CD4-positive, alpha-beta memory T cell (primary cell): ENCODE measurements at regions of chr3 and their contacts with region 1.

Region 1: DNA sequence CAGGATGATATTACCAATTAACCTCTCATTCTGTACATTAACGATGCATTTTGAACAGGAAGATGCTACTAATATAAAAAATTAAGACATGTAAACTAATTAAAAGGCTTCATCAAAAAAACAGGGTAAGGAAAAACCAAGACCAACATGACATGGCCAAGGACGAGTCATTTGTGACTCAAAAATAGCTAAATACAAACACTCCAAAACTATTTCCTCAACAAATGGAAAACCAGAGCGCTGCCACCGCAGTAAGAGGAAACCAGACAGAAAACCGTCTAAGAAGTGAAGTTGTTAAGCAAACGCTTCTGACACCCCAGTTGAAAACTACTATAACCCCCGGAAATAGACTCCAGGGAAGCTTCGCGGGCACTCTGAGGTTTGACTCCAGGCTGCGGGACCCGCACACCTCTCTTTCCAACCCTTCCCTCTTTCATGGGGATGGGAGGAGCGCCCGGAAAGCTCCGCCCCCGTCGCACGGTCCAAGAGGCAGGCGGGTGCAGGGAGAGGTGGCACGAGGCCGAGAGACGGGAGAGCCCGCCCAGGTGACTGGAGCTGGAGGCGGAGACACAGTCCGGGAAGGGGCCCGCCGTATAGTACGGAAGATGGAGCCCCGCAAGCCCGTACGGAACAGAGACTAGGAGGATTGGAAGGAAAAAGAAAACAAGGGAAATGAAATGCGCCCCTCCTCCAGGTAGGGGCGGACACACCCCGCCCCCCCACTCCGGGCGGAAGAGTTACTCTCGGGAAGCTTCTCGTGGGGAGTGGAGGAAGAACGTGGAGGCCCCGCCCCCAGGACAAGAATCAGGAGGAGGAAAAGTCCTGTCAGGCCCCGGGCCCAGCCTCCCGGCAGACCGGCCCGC is 708 bp downstream of the DCAF1 start:
- DNase-seq: peak; percentile 77 to 86 (median 79)
- H3K4me3 ChIP-seq: peak overlapping the region; percentile 54 to 81
- H3K4me3 Mint-ChIP-seq: peak overlapping the region; percentile 91 to 100 (median 95)
- H3K27ac ChIP-seq: peak overlapping the region; percentile 88
- H3K27ac Mint-ChIP-seq: peak overlapping the region; percentile 93 to 99 (median 98)
- H3K4me1 ChIP-seq: peaks cover 25% of the 10 kb centered on the region
- H3K4me1 Mint-ChIP-seq: peaks cover 12 to 27% (median 14%) of the 10 kb centered on the region in 4 donors
- H3K27me3 ChIP-seq: no peaks in the 10 kb centered on the region
- H3K27me3 Mint-ChIP-seq: peaks cover 0 to 2% of the 10 kb centered on the region in 2 donors

Region 2: GRCh38 chr3:51384726-51385473 is 114.2 kb before region 1 on chr3 and contains the start of gene MANF:
- CTCF ChIA-PET with region 1: interaction called, 52 read pairs
- POLR2A ChIA-PET with region 1: interaction called, 34 read pairs
- intact Hi-C with region 1: loop called (anchors 1 kb)
- DNase-seq: peak; percentile 97 to 98 (median 98)
- H3K4me3 ChIP-seq: peak within 1 kb of the TSS; percentile 61 to 93
- H3K4me3 Mint-ChIP-seq: peak within 1 kb of the TSS; percentile 98 to 99 (median 99)
- H3K27ac ChIP-seq: peak within 1 kb of the TSS; percentile 92
- H3K27ac Mint-ChIP-seq: peak within 1 kb of the TSS; percentile 98 to 100 (median 99)
- H3K4me1 ChIP-seq: peaks cover 38% of the 10 kb centered on the region
- H3K4me1 Mint-ChIP-seq: peaks cover 25 to 62% (median 42%) of the 10 kb centered on the region in 4 donors
- H3K27me3 ChIP-seq: no peaks in the 10 kb centered on the region
- H3K27me3 Mint-ChIP-seq: no peaks in the 10 kb centered on the region
- total RNA-seq, gene MANF: 74.8 to 79.0 TPM

Region 3: GRCh38 chr3:51538459-51539290 is 39.6 kb after region 1 on chr3 and contains the start of gene RAD54L2:
- CTCF ChIA-PET with region 1: interaction called, 35 read pairs
- POLR2A ChIA-PET with region 1: interaction called, 41 read pairs
- intact Hi-C with region 1: loop called (anchors 1 kb)
- DNase-seq: peak; percentile 62 to 74 (median 66)
- H3K4me3 ChIP-seq: peak within 1 kb of the TSS; percentile 76 to 80
- H3K4me3 Mint-ChIP-seq: peak within 1 kb of the TSS; percentile 85 to 98 (median 94)
- H3K27ac ChIP-seq: peak within 1 kb of the TSS; percentile 67
- H3K27ac Mint-ChIP-seq: peak within 1 kb of the TSS; percentile 91 to 97 (median 95)
- H3K4me1 ChIP-seq: peaks cover 27% of the 10 kb centered on the region
- H3K4me1 Mint-ChIP-seq: peaks cover 26 to 42% (median 33%) of the 10 kb centered on the region in 4 donors
- H3K27me3 ChIP-seq: no peaks in the 10 kb centered on the region
- H3K27me3 Mint-ChIP-seq: no peaks in the 10 kb centered on the region
- total RNA-seq, gene RAD54L2: 39.8 to 40.1 TPM

Region 4: DNA sequence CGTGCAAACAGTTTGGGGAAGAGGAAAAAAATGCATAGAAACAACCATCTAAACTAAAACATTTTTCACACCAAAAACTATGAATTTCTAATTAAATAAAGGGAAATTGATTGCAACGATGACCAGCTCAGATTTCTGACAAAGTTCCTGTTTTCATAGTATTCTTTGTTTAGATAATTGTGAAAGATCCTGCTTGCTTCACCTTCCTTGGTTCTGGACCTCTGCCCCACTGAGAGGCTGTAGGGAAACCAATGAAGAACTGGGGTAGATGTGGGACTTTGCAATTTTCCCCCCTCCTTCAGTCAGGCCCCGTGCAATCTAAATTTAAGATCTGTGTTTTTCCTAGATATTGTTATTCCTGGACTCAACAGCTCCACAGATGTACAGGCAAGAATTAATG is 158.1 kb after region 1 on chr3:
- CTCF ChIA-PET with region 1: no interaction called
- POLR2A ChIA-PET with region 1: no interaction called
- intact Hi-C with region 1: no loop called
- DNase-seq: no peak
- H3K4me3 ChIP-seq: no peak overlapping the region
- H3K4me3 Mint-ChIP-seq: no peak overlapping the region
- H3K27ac ChIP-seq: no peak overlapping the region
- H3K27ac Mint-ChIP-seq: peak overlapping the region in 2 of 7 donors; percentile 21 to 64
- H3K4me1 ChIP-seq: no peaks in the 10 kb centered on the region
- H3K4me1 Mint-ChIP-seq: no peaks in the 10 kb centered on the region
- H3K27me3 ChIP-seq: no peaks in the 10 kb centered on the region
- H3K27me3 Mint-ChIP-seq: no peaks in the 10 kb centered on the region

Region 5: DNA sequence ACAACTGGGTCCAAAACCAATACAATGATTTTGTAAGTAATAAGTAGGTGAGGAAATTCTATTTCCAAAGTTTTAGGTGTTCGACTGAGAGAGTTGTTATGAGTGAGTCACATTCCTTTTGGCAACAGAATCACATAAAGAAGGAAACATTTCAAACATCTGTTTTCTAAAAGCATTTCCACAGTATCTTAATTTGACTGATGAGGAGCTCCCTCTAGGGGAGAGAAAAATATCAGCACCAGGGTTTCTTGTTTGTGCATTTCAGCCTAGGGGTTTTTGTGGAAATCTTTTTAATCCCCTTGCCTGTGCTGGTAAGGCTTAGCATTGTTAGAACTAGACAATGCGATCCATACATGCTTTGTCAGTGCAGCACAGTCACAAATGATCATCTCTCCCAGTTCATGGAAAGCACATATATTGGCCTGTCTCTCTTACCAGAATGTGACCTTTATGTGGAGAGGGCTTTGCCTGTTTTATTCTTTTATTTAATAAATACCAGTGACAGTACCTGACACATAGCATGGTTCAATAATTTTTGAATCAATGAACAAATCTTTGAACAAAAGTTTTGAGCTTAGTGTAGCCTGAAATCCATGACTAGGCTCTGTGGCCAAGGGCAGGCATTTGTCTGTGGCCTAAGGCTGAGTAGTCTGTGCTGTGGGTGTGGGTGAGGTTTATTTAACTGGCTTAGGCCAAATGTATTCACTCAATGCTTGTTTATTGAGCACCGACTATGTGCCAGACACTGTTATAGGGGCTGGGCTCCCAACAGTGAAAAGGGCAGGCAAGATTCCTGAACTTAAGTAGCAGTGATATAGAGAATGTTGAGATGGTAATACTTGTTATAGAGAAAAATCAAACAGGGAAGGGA is 301.0 kb after region 1 on chr3:
- CTCF ChIA-PET with region 1: interaction called, 121 read pairs
- POLR2A ChIA-PET with region 1: interaction called, 5 read pairs
- intact Hi-C with region 1: no loop called
- DNase-seq: peak in 4 of 5 donors; percentile 44 to 61 (median 57)
- H3K4me3 ChIP-seq: no peak overlapping the region
- H3K4me3 Mint-ChIP-seq: no peak overlapping the region
- H3K27ac ChIP-seq: no peak overlapping the region
- H3K27ac Mint-ChIP-seq: peak overlapping the region in 1 of 7 donors; percentile 37
- H3K4me1 ChIP-seq: peaks cover 7% of the 10 kb centered on the region
- H3K4me1 Mint-ChIP-seq: peaks cover 5 to 25% (median 13%) of the 10 kb centered on the region in 4 donors
- H3K27me3 ChIP-seq: no peaks in the 10 kb centered on the region
- H3K27me3 Mint-ChIP-seq: peaks cover 2 to 4% of the 10 kb centered on the region in 2 donors

Region 6: GRCh38 chr3:52056968-52057805 is 558.1 kb after region 1 on chr3:
- CTCF ChIA-PET with region 1: no interaction called
- POLR2A ChIA-PET with region 1: no interaction called
- intact Hi-C with region 1: loop called (anchors 2 kb)
- DNase-seq: peak; percentile 99 to 100 (median 99)
- H3K4me3 ChIP-seq: peak overlapping the region; percentile 90 to 97
- H3K4me3 Mint-ChIP-seq: peak overlapping the region; percentile 83 to 96 (median 92)
- H3K27ac ChIP-seq: peak overlapping the region; percentile 82
- H3K27ac Mint-ChIP-seq: peak overlapping the region; percentile 92 to 98 (median 96)
- H3K4me1 ChIP-seq: peaks cover 41% of the 10 kb centered on the region
- H3K4me1 Mint-ChIP-seq: peaks cover 20 to 44% (median 30%) of the 10 kb centered on the region in 4 donors
- H3K27me3 ChIP-seq: no peaks in the 10 kb centered on the region
- H3K27me3 Mint-ChIP-seq: no peaks in the 10 kb centered on the region